Activated CD4-positive, alpha-beta memory T cell treated with anti-CD3 and anti-CD28 coated beads, Interleukin-2, amount 10 ng/mL, durations not matched to agents 7 days and 5 days (primary cell): ENCODE measurements at regions of chr18 and their contacts with region 1.

Region 1: DNA sequence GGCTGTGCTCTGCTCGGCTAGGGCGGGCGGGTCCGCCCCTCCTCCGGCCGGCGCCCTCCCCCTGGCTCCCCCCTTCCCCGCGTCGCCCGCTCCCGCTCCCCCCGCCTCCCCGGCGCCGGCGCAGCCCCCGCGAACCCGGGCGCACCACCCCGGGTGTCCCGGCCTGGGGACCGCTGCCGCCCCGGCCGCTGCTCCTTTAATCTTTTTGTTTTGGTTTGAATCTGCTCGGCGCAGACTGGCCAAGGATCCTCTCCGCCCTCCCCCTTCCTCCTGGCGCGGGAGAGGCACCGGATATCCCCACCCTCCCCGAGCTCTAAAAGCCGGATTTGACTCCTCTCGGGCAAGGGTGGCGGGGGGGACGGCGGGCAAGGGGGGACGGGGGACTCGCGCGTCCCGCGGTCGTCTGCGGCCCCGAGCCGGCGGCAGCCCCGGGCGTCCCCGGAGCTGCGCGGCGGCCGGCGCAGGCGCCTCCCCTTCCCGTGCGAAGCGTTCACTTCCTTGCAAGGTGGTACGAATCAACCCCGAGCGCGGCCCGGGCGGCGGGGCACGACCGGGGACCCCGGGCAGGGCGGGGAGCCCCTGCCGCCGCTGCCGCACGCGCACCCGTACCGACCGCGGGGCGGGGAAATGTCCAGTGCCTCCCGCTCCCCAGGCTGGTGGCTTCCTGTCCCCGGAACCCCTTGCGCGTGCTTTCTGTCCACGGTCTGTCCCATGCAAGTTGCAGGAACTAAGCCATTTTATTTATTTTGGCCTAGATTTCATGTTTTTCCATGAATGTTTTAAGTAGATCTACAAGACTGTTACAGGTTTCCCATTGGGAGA is at the start of gene PTGR3:
- DNase-seq: peak; percentile 89
- H3K4me3 Mint-ChIP-seq: peak within 1 kb of the TSS; percentile 94
- H3K27ac Mint-ChIP-seq: peak within 1 kb of the TSS; percentile 98
- H3K4me1 Mint-ChIP-seq: peaks cover 63% of the 10 kb centered on the region
- H3K27me3 Mint-ChIP-seq: peaks cover 20% of the 10 kb centered on the region
- total RNA-seq, gene PTGR3: 39.8 to 41.4 TPM

Region 2: DNA sequence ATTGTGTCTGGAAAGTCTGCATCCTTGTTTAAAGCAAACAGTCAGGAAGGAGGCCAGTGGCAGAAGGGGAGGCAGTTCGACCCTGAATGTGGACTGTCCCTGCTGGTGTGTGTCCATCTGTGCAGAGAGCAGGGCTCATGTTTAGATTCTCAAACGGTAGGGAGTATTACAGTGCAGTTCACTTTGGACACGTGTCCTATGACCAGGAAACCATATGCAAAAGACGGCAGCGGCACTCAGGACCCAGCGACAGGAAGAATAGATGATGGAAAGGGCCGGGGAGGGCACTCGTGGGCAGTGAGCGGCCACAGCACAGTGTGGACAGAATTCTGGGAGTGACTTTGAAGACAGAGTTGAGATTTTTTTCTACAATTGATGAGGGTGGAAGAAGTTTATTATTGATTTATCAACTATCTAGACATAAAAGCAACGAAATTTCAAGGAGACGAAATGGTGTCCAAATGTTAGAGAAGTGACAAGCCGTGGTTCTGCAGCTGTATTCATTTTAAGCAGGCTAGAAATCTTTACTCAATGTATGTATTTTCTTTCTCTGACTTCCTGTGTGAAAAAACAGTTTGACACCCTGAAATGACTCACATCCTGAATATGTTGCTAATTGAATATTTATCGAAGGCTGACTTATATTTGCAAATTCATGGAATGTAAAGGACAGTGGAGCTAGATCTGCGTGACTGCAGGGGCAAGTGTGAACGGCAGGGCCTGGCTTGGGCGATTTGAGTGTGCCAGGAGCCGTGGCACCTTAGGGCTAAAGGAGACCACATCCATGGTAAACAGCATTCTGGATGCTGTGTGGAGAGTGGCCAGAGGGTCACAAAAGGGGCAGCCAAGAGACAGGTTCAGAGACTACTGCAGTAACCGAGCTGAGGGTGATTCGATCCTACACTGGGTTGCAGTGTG is 214.6 kb before region 1 on chr18:
- CTCF ChIA-PET with region 1: interaction called, 5 read pairs
- POLR2A ChIA-PET with region 1: interaction called, 20 read pairs
- DNase-seq: peak; percentile 55
- H3K4me3 Mint-ChIP-seq: peak overlapping the region; percentile 71
- H3K27ac Mint-ChIP-seq: peak overlapping the region; percentile 99
- H3K4me1 Mint-ChIP-seq: peaks cover 60% of the 10 kb centered on the region
- H3K27me3 Mint-ChIP-seq: no peaks in the 10 kb centered on the region

Region 3: DNA sequence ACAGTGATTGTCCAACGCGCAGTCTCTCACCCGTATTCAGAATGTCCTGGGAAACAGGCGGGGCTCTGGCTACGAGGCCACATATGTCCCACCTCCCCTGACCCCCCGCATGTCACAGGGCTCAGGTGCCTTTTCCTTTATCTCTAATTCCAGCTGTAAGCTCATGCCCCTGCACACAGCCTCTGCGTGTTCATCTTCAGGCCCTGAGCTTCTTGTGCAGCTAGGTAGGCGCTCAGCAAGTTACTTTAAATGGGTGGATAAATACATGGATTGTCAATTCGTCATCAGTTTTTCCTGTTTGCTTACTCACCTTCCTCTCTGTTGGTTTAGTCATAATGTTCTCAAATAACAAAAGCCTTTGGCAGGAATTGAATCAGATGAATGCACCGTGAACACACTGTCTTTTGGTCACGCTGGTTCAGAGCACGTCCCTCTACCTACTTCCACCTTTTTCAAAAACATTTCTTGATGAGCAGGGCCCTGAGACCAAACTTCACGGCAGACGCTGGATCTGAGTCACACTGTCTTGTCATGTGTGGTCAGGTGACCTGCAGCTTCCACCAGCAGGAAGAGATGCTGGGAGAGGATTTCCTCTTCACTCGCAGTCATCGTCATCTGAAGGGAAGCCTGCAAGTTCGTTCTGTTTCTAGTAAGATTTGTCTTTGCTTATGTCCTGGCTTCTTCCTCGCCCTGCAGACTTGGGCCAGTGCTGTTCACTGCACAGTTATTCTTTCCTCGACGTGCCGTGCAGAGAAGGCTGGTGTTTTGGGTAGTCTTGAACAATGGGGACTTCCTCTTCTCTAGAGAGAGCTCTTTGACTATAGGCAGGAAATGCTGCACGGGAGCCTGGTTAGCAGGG is 138.5 kb before region 1 on chr18:
- CTCF ChIA-PET with region 1: no interaction called
- POLR2A ChIA-PET with region 1: interaction called, 31 read pairs
- DNase-seq: peak; percentile 82
- H3K4me3 Mint-ChIP-seq: peak overlapping the region; percentile 81
- H3K27ac Mint-ChIP-seq: peak overlapping the region; percentile 100
- H3K4me1 Mint-ChIP-seq: peaks cover 37% of the 10 kb centered on the region
- H3K27me3 Mint-ChIP-seq: no peaks in the 10 kb centered on the region

Region 4: DNA sequence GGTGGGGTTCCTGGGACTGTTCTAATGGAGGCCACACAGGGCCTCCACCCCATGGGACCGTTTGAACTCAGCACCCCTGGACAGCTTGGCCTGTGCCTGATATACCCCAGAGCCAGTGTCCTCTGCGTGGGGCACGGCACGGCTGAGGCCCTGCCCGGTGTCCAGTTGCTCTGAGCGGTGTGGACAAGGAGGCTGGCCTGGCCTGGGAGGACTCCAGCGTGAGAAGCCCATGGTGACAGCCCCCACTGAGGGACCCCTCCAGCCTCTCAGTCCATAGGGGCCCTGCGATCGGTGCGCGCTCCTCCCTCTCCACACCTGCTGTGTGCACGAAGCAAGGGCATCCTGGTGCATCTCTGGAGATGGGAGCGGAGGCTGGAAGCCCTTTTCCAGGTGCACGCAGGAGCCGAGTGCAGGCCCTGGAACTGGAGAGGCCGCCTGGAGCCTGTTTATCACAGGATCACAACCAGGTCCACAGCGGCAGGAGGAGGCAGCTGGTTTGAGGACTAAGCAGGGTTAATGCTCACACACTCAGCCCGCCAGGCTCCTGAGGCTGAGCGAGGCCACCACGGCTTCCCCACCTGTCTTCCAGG is 120.6 kb before region 1 on chr18:
- CTCF ChIA-PET with region 1: no interaction called
- POLR2A ChIA-PET with region 1: no interaction called
- DNase-seq: no peak
- H3K4me3 Mint-ChIP-seq: no peak overlapping the region
- H3K27ac Mint-ChIP-seq: no peak overlapping the region
- H3K4me1 Mint-ChIP-seq: no peaks in the 10 kb centered on the region
- H3K27me3 Mint-ChIP-seq: no peaks in the 10 kb centered on the region

Region 5: DNA sequence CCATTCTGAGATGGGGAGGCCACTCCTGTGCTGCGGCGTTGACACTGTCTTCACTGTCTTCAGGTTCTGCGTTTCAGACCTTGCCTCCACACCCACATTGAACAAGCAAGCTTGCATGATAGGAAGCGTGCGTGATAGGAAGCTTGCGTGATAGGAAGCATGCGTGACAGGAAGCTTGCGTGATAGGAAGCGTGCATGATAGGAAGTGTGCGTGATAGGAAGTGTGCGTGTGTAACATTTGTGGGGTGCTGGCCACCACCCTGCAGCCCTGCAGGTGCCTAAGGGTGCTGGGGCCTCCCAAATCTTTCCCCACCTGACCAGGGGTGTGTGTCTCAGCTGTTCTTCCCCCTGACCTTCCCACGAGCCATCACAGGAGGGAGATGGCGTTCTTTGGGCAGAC is 26.6 kb after region 1 on chr18:
- CTCF ChIA-PET with region 1: no interaction called
- POLR2A ChIA-PET with region 1: no interaction called
- DNase-seq: no peak
- H3K4me3 Mint-ChIP-seq: no peak overlapping the region
- H3K27ac Mint-ChIP-seq: no peak overlapping the region
- H3K4me1 Mint-ChIP-seq: no peaks in the 10 kb centered on the region
- H3K27me3 Mint-ChIP-seq: no peaks in the 10 kb centered on the region

Region 6: DNA sequence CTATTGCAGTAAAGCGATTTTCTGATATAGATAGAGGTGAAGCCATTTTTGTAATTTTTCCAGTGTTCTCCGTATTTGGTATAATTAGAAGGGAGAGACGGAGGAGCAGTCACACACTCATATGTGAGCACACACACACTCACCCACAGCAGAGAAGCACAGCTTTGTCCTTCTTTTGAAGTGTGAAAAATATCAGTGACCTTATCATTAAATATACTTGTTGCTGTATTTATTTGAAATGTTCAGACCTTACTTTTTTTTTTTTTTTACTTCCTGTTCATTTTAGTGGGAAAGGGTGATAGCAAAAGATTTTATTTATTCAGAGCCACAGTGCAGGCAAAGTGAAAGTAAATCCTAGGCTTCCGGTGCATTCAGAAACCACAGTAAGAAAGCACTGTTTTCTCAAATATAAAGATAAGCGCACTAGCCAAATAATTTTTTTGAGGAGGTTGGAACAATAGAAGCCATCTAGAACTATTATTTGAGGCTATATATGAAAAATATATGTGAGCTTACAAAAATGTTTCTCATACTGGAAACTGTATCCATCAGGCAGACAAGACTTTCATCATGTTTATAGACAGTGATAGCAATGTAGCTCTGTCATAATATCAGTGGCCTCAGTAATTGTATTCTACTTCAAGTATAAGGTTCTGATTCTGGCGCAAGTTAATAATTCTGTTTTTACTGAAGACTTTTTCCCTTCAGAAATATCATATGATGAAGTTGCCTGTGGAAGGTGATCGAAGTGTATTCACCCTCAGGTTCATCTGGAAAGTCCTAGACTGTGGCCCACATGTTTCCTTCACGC is 38.5 kb after region 1 on chr18:
- CTCF ChIA-PET with region 1: no interaction called
- POLR2A ChIA-PET with region 1: interaction called, 16 read pairs
- DNase-seq: no peak
- H3K4me3 Mint-ChIP-seq: peak overlapping the region; percentile 78
- H3K27ac Mint-ChIP-seq: peak overlapping the region; percentile 67
- H3K4me1 Mint-ChIP-seq: peaks cover 42% of the 10 kb centered on the region
- H3K27me3 Mint-ChIP-seq: no peaks in the 10 kb centered on the region